CD8-positive, alpha-beta T cell (primary cell): ENCODE measurements at regions of chr1 and their contacts with region 1.

Region 1: GRCh38 chr1:109790735-109791494 is 27.2 kb upstream of the EPS8L3 start:
- DNase-seq: peak; percentile 55 to 90 (median 84)
- ATAC-seq: peak; percentile 94
- H3K4me3 ChIP-seq: no peak overlapping the region
- H3K4me3 Mint-ChIP-seq: no peak overlapping the region
- H3K27ac ChIP-seq: peak overlapping the region; percentile 14 to 74
- H3K27ac Mint-ChIP-seq: peak overlapping the region; percentile 85
- H3K4me1 ChIP-seq: peaks cover 59% of the 10 kb centered on the region
- H3K4me1 Mint-ChIP-seq: peaks cover 70% of the 10 kb centered on the region
- H3K27me3 ChIP-seq: no peaks in the 10 kb centered on the region
- H3K27me3 Mint-ChIP-seq: no peaks in the 10 kb centered on the region
- CTCF ChIP-seq: peak; percentile 54

Region 2: DNA sequence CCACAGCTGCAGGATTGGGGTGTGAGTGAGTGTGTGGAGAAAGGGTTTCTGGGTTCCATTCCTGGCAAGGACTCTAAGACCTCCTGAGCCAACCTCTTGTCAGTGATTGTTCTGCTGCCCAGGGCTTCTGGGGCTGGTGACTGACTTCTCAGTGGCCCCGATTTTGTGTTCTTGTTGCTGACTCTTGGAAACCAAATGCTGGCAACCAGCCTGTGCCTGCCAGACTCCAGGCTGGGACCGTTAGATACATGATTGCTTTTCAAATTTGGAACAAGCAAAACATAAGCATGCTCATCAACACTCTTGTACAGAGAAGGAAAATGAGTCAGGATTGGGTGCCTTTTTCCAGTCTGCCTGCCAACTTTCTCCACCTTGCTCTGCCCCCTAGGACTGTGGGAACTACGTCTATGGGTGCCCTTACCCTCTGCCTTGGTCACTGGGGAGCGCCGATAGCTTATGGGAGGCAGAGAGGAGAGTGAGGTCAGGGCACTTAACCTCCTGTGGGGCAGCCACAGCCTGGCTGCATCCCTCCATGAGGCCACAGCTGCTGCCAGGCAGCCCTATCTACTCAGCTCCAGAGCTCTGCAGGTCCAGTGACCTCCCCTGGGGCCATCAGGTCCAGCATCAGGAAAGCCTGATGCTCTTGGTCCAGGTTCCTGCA is 12.1 kb after region 1 on chr1:
- CTCF ChIA-PET with region 1: interaction called, 30 read pairs
- POLR2A ChIA-PET with region 1: interaction called, 7 read pairs
- intact Hi-C with region 1: loop called in 1 of 2 experiments (anchors 1 kb)
- DNase-seq: no peak
- ATAC-seq: no peak
- H3K4me3 ChIP-seq: peak overlapping the region; percentile 10 to 28
- H3K4me3 Mint-ChIP-seq: peak overlapping the region; percentile 73
- H3K27ac ChIP-seq: peak overlapping the region; percentile 1 to 55
- H3K27ac Mint-ChIP-seq: peak overlapping the region; percentile 85
- H3K4me1 ChIP-seq: peaks cover 62% of the 10 kb centered on the region
- H3K4me1 Mint-ChIP-seq: peaks cover 61% of the 10 kb centered on the region
- H3K27me3 ChIP-seq: no peaks in the 10 kb centered on the region
- H3K27me3 Mint-ChIP-seq: no peaks in the 10 kb centered on the region
- CTCF ChIP-seq: no peak

Region 3: GRCh38 chr1:109807822-109808680 is 17.1 kb after region 1 on chr1:
- CTCF ChIA-PET with region 1: interaction called, 13 read pairs
- POLR2A ChIA-PET with region 1: interaction called, 3 read pairs
- intact Hi-C with region 1: no loop called
- DNase-seq: no peak
- ATAC-seq: no peak
- H3K4me3 ChIP-seq: no peak overlapping the region
- H3K4me3 Mint-ChIP-seq: no peak overlapping the region
- H3K27ac ChIP-seq: no peak overlapping the region
- H3K27ac Mint-ChIP-seq: no peak overlapping the region
- H3K4me1 ChIP-seq: peaks cover 22% of the 10 kb centered on the region
- H3K4me1 Mint-ChIP-seq: peaks cover 26% of the 10 kb centered on the region
- H3K27me3 ChIP-seq: no peaks in the 10 kb centered on the region
- H3K27me3 Mint-ChIP-seq: no peaks in the 10 kb centered on the region
- CTCF ChIP-seq: no peak

Region 4: DNA sequence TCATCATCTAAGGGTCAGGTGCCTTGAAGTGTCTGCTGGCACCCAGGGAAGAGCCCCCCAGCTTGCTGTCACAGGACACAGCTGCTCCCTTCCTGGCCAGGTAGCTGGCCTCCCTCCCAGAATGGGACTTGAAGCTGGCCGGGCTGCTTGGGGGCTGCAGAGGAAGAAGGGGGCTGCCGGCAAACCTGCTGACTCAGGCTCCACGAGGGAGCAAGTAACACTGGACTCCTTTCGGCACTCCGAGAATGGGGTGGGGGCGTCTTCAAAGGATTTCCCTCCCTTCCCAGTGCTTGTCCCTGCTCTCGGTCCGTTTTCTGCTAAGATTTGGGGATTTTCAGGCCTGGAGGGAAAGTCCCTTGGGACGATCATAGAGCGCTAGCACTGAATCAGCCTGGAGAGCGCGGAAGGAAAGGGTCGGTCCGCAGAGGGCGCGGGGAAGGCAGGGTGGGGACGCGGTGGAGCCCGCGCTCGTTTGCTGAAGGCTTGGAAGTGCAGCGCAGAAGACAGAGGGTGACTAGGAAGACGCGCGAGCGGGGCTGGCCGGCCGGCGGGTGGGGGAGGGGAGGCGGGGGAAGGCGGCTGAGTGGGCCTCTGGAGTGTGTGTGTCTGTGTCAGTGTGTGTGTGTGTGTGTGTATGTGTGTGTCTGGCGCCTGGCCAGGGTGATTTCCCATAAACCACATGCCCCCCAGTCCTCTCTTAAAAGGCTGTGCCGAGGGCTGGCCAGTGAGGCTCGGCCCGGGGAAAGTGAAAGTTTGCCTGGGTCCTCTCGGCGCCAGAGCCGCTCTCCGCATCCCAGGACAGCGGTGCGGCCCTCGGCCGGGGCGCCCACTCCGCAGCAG is 119.4 kb after region 1 on chr1 and contains the start of gene CSF1:
- CTCF ChIA-PET with region 1: interaction called, 17 read pairs
- POLR2A ChIA-PET with region 1: no interaction called
- intact Hi-C with region 1: loop called in 1 of 2 experiments (anchors 5 kb)
- DNase-seq: peak; percentile 24 to 84 (median 55)
- ATAC-seq: peak; percentile 50
- H3K4me3 ChIP-seq: peak within 1 kb of the TSS; percentile 53 to 66
- H3K4me3 Mint-ChIP-seq: peak within 1 kb of the TSS; percentile 88
- H3K27ac ChIP-seq: peak within 1 kb of the TSS in 1 of 2 experiments; percentile 29
- H3K27ac Mint-ChIP-seq: peak within 1 kb of the TSS; percentile 83
- H3K4me1 ChIP-seq: peaks cover 32% of the 10 kb centered on the region
- H3K4me1 Mint-ChIP-seq: peaks cover 61% of the 10 kb centered on the region
- H3K27me3 ChIP-seq: no peaks in the 10 kb centered on the region
- H3K27me3 Mint-ChIP-seq: no peaks in the 10 kb centered on the region
- CTCF ChIP-seq: no peak
- total RNA-seq, gene CSF1: 5.6 to 5.8 TPM